Mammary epithelial cell (primary cell): ENCODE measurements at regions of chr7 and their contacts with region 1.

Region 1: GRCh38 chr7:6317797-6318438 is 45.5 kb upstream of the CYTH3 start:
- DNase-seq: peak; percentile 12
- H3K4me3 ChIP-seq: no peak overlapping the region
- H3K27ac ChIP-seq: no peak overlapping the region
- H3K4me1 ChIP-seq: peaks cover 10% of the 10 kb centered on the region
- H3K27me3 ChIP-seq: no peaks in the 10 kb centered on the region
- CTCF ChIP-seq: no peak

Region 2: GRCh38 chr7:6186593-6186992 is 131.3 kb before region 1 on chr7:
- CTCF ChIA-PET with region 1: no interaction called
- dilution Hi-C with region 1: loop called (anchors 5 kb)
- in situ Hi-C with region 1: no loop called
- intact Hi-C with region 1: no loop called
- DNase-seq: no peak
- H3K4me3 ChIP-seq: no peak overlapping the region
- H3K27ac ChIP-seq: no peak overlapping the region
- H3K4me1 ChIP-seq: no peaks in the 10 kb centered on the region
- H3K27me3 ChIP-seq: no peaks in the 10 kb centered on the region
- CTCF ChIP-seq: no peak